CD4-positive, alpha-beta T cell (primary cell): ENCODE measurements at regions of chr5 and their contacts with region 1.

Region 1: GRCh38 chr5:78984439-78985115 is 533 bp downstream of the ARSB start:
- DNase-seq: peak; percentile 49 to 90 (median 70)
- ATAC-seq: peak; percentile 76
- H3K4me3 ChIP-seq: peak overlapping the region; percentile 68
- H3K4me3 Mint-ChIP-seq: peak overlapping the region; percentile 97
- H3K27ac ChIP-seq: peak overlapping the region; percentile 51 to 77
- H3K27ac Mint-ChIP-seq: peak overlapping the region; percentile 98
- H3K4me1 ChIP-seq: peaks cover 14% of the 10 kb centered on the region
- H3K4me1 Mint-ChIP-seq: peaks cover 33% of the 10 kb centered on the region
- H3K27me3 ChIP-seq: no peaks in the 10 kb centered on the region
- H3K27me3 Mint-ChIP-seq: no peaks in the 10 kb centered on the region
- CTCF ChIP-seq: peak; percentile 9

Region 2: DNA sequence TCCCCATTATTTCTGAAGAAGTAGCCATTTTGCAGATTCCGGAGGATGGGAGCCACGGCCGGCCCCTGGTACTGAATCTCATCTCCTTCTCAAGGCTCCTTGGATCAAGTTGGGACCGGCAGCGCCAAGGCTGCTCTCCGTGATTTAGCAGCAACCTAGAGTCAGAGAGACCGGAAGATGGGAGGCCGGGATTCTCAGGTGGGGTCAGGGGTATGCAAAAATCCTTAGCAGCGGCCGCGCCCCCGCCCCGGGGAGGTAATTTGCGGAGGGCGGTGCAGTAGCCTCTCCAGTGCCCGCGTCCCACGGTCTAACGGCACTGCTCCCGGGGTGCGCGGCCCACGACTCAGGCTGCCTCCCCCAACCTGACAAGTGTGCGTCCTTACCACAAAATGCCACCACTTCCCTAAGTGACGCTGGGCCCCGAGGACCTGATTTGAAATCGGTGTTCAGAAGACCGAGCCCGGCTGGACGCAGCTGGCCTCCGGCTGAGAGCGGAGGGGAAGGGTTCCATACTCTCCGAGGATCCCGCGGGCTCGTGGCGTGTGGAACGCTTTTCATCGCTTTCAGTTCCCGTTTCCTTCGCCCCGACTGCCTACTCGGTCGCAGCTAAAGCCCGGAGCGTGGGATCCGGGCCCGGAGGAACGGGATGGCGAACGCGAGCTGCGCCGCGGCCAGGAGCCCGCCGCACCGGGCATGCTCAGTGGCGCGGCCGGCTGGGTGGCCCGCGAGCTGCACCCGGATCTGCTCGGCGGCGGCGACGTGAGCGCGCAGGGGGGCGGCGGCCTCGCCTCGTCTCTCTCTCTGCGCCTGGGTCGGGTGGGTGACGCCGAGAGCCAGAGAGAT is 624.5 kb before region 1 on chr5 and contains the start of gene SCAMP1:
- CTCF ChIA-PET with region 1: interaction called, 5 read pairs
- POLR2A ChIA-PET with region 1: interaction called, 4 read pairs
- intact Hi-C with region 1: loop called in 1 of 2 experiments (anchors 10 kb)
- DNase-seq: peak; percentile 80 to 96 (median 90)
- ATAC-seq: peak; percentile 79
- H3K4me3 ChIP-seq: peak within 1 kb of the TSS; percentile 96
- H3K4me3 Mint-ChIP-seq: peak within 1 kb of the TSS; percentile 91
- H3K27ac ChIP-seq: peak within 1 kb of the TSS; percentile 86 to 87
- H3K27ac Mint-ChIP-seq: peak within 1 kb of the TSS; percentile 83
- H3K4me1 ChIP-seq: peaks cover 23% of the 10 kb centered on the region
- H3K4me1 Mint-ChIP-seq: peaks cover 53% of the 10 kb centered on the region
- H3K27me3 ChIP-seq: no peaks in the 10 kb centered on the region
- H3K27me3 Mint-ChIP-seq: no peaks in the 10 kb centered on the region
- CTCF ChIP-seq: peak; percentile 27
- total RNA-seq, gene SCAMP1: 16.0 to 18.4 TPM

Region 3: GRCh38 chr5:79109527-79110492 is 125.2 kb after region 1 on chr5:
- CTCF ChIA-PET with region 1: no interaction called
- POLR2A ChIA-PET with region 1: no interaction called
- intact Hi-C with region 1: loop called in 1 of 2 experiments (anchors 5 kb)
- DNase-seq: peak in 11 of 14 experiments; percentile 7 to 52 (median 22)
- ATAC-seq: no peak
- H3K4me3 ChIP-seq: no peak overlapping the region
- H3K4me3 Mint-ChIP-seq: no peak overlapping the region
- H3K27ac ChIP-seq: no peak overlapping the region
- H3K27ac Mint-ChIP-seq: no peak overlapping the region
- H3K4me1 ChIP-seq: no peaks in the 10 kb centered on the region
- H3K4me1 Mint-ChIP-seq: no peaks in the 10 kb centered on the region
- H3K27me3 ChIP-seq: peaks cover 29 to 64% of the 10 kb centered on the region in 2 experiments
- H3K27me3 Mint-ChIP-seq: peaks cover 83% of the 10 kb centered on the region
- CTCF ChIP-seq: peak; percentile 72

Region 4: GRCh38 chr5:79514391-79515105 is 530.0 kb after region 1 on chr5:
- CTCF ChIA-PET with region 1: interaction called, 3 read pairs
- POLR2A ChIA-PET with region 1: interaction called, 5 read pairs
- intact Hi-C with region 1: loop called in 1 of 2 experiments (anchors 5 kb)
- DNase-seq: peak; percentile 76 to 97 (median 87)
- ATAC-seq: peak; percentile 85
- H3K4me3 ChIP-seq: peak overlapping the region; percentile 79
- H3K4me3 Mint-ChIP-seq: peak overlapping the region; percentile 98
- H3K27ac ChIP-seq: peak overlapping the region; percentile 69 to 89
- H3K27ac Mint-ChIP-seq: peak overlapping the region; percentile 96
- H3K4me1 ChIP-seq: peaks cover 19% of the 10 kb centered on the region
- H3K4me1 Mint-ChIP-seq: peaks cover 41% of the 10 kb centered on the region
- H3K27me3 ChIP-seq: peaks cover 5 to 15% of the 10 kb centered on the region in 2 experiments
- H3K27me3 Mint-ChIP-seq: peaks cover 34% of the 10 kb centered on the region
- CTCF ChIP-seq: no peak

Region 5: DNA sequence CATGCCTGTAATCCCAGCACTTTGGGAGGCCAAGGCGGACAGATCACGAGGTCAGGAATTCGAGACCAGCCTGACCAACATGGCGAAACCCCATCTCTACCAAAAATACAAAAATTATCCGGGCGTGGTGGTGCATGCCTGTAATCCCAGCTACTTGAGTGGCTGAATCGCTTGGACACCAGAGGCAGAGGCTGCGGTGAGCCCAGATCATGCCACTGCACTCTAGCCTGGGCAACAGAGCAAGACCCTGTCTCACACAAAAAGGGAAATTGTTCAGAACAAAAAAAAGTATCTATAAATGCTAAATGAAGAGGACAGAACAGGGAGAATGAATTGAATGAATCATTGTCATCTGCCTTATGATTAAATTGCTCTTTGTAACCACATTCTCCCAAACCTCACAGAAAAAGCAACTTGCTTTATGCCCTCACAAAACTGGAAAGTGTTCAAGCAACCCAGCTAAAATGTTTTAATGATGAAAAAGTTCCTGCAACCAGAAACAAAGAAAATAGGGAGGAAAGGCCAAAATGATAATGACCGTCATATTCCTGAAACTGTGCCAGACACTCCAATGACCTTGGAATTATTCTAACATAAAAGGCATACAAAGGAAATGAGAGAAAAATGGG is 1187.6 kb after region 1 on chr5:
- CTCF ChIA-PET with region 1: no interaction called
- POLR2A ChIA-PET with region 1: no interaction called
- intact Hi-C with region 1: no loop called
- DNase-seq: no peak
- ATAC-seq: no peak
- H3K4me3 ChIP-seq: no peak overlapping the region
- H3K4me3 Mint-ChIP-seq: no peak overlapping the region
- H3K27ac ChIP-seq: no peak overlapping the region
- H3K27ac Mint-ChIP-seq: peak overlapping the region; percentile 78
- H3K4me1 ChIP-seq: peaks cover 14% of the 10 kb centered on the region
- H3K4me1 Mint-ChIP-seq: peaks cover 48% of the 10 kb centered on the region
- H3K27me3 ChIP-seq: no peaks in the 10 kb centered on the region
- H3K27me3 Mint-ChIP-seq: no peaks in the 10 kb centered on the region
- CTCF ChIP-seq: no peak